GM12878 (cell line): ENCODE measurements at regions of chr21 and their contacts with region 1.

Region 1: GRCh38 chr21:45554477-45555175 is 12.4 kb upstream of the SLC19A1 start:
- DNase-seq: peak; percentile 23
- ATAC-seq: peak; percentile 61
- H3K4me3 ChIP-seq: peak overlapping the region; percentile 78
- H3K27ac ChIP-seq: peak overlapping the region; percentile 67
- H3K4me1 ChIP-seq: peaks cover 30% of the 10 kb centered on the region
- H3K27me3 ChIP-seq: no peaks in the 10 kb centered on the region; a peak in 1 of 4 replicates
- CTCF ChIP-seq: peak; percentile 71 to 86 (median 82)
- EP300 ChIP-seq: no peak
- POLR2A ChIP-seq: peak; percentile 75
- RAD21 ChIP-seq: peak; percentile 72

Region 2: DNA sequence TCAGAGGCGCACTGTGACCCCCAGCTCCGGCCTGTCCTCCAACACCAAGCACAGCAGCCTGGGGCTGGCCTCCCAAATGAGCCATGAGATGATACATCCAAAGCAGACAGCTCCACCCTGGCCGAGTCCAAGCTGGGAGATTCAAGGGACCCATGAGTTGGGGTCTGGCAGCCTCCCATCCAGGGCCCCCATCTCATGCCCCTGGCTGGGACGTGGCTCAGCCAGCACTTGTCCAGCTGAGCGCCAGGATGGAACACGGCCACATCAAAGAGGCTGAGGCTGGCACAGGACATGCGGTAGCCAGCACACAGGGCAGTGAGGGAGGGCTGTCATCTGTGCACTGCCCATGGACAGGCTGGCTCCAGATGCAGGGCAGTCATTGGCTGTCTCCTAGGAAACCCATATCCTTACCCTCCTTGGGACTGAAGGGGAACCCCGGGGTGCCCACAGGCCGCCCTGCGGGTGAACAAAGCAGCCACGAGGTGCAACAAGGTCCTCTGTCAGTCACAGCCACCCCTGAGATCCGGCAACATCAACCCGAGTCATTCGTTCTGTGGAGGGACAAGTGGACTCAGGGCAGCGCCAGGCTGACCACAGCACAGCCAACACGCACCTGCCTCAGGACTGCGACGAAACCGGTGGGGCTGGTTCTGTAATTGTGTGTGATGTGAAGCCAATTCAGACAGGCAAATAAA is 41.5 kb before region 1 on chr21:
- CTCF ChIA-PET with region 1: no interaction called
- POLR2A ChIA-PET with region 1: no interaction called
- RAD21 ChIA-PET with region 1: no interaction called
- SMC1A ChIA-PET with region 1: no interaction called
- in situ Hi-C with region 1: no loop called
- intact Hi-C with region 1: no loop called
- DNase-seq: no peak
- ATAC-seq: no peak
- H3K4me3 ChIP-seq: no peak overlapping the region
- H3K27ac ChIP-seq: no peak overlapping the region
- H3K4me1 ChIP-seq: no peaks in the 10 kb centered on the region
- H3K27me3 ChIP-seq: no peaks in the 10 kb centered on the region
- CTCF ChIP-seq: no peak
- EP300 ChIP-seq: no peak
- POLR2A ChIP-seq: no peak
- RAD21 ChIP-seq: no peak

Region 3: DNA sequence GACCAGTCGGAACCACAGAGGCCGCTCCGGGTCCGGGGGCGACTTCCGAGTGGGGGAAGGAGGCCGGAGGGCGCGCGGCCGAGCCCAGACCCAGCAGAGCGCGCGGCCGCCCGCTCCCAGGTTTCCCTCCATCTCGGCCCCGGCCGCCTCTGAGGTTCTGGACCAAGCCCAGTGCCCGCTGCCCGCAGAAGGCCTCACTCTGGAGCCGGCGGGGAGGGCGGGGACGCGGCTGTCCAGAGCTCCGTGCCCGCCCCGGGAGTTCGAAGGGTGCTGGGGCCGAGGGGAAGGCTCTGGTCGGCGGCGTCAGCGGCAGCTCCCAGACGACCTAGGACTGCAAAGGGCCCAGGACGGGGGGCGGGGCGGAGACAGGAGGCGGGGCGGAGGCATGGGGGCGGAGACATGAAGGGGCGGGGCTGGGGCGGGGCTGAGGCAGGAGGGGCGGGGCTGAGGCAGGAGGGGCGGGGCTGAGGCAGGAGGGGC is 35.7 kb after region 1 on chr21:
- CTCF ChIA-PET with region 1: interaction called, 76 read pairs
- POLR2A ChIA-PET with region 1: interaction called, 3 read pairs
- RAD21 ChIA-PET with region 1: interaction called, 37 read pairs
- SMC1A ChIA-PET with region 1: interaction called, 46 read pairs
- in situ Hi-C with region 1: loop called (anchors 5 kb)
- intact Hi-C with region 1: loop called (anchors 1 kb)
- DNase-seq: no peak
- ATAC-seq: peak; percentile 51
- H3K4me3 ChIP-seq: no peak overlapping the region
- H3K27ac ChIP-seq: no peak overlapping the region
- H3K4me1 ChIP-seq: peaks cover 20% of the 10 kb centered on the region
- H3K27me3 ChIP-seq: no peaks in the 10 kb centered on the region
- CTCF ChIP-seq: no peak
- EP300 ChIP-seq: no peak
- POLR2A ChIP-seq: no peak
- RAD21 ChIP-seq: no peak

Region 4: DNA sequence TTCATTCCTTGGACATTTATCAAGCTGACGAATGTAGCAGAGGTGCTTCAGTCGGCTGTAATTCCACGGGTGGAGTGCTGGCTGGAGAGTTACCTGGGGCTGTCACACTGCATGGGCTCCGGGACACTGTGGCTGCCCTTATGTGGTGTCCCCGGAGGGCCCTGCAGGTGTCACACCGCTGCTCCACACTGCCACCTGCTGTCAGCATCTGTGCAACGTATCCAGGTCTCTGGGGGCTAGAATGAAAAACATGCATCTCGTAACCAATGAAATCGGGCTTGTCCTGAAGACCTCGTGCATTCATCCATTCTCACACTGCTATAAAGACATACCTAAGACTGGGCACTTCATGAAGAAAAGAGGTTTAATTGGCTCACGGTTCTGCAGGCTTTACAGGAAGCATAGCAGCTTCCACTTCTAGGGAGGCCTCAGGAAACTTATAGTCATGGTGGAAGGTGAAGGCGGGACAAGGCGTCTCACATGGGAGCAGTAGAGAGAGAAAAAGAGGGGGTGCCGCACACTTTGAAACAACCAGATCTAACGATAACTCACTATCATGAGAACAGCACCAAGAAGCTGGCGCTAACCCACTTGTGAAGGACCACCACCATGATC is 42.2 kb after region 1 on chr21:
- CTCF ChIA-PET with region 1: interaction called, 76 read pairs
- POLR2A ChIA-PET with region 1: interaction called, 3 read pairs
- RAD21 ChIA-PET with region 1: interaction called, 37 read pairs
- SMC1A ChIA-PET with region 1: interaction called, 46 read pairs
- in situ Hi-C with region 1: loop called (anchors 5 kb)
- intact Hi-C with region 1: loop called (anchors 1 kb)
- DNase-seq: no peak
- ATAC-seq: peak; percentile 70
- H3K4me3 ChIP-seq: no peak overlapping the region
- H3K27ac ChIP-seq: no peak overlapping the region
- H3K4me1 ChIP-seq: peaks cover 12% of the 10 kb centered on the region
- H3K27me3 ChIP-seq: no peaks in the 10 kb centered on the region
- CTCF ChIP-seq: peak; percentile 78 to 85 (median 79)
- EP300 ChIP-seq: no peak
- POLR2A ChIP-seq: no peak
- RAD21 ChIP-seq: peak; percentile 72

Region 5: DNA sequence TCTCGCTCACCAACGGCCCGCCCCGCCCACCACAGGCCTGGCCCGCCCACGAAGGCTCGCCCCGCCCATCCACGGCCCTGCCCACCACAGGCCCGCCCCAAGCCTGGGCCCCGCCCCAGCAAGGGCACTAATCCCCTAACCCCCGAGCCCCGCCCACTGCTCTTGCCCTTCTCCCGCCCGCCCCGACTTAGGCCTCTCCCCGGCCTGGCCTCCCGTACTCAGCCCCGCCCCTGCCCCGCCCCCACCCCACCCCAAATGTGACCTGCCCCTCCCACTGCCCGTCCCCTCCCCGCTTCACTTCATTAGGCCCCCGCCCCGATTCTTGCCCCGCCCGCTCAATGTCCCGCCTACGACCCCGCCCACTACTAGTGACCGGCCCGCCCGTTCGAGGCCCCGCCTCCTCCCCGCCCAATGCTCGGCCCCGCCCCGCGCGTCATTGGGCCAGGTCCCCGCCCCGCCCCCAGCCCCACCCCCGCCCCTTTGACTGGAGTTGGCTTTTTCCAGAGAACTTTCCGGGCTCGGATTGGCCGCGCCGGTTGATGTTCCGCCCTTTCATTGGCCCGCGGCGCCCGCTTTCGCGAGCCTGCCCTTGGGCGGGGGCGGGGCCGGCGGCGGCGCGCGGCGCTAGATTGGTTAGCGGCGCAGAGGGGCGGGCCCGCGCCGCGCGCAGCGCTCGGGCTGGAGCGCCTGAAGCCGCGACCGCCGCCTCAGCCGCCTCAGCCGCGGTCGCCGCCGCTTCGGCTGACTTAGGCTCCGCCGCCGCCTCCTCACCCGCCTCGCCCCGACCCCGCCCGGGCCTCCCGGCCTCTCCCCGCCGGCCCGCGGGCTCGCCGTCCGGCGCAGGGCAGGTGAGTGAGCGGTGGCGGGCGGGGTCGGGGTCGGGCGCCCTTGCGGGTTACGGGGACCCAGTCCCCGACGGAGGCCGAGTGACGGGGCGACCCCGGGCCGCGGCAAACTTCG is 88.7 kb after region 1 on chr21 and contains the start of gene PCBP3:
- CTCF ChIA-PET with region 1: interaction called, 10 read pairs
- POLR2A ChIA-PET with region 1: interaction called, 8 read pairs
- RAD21 ChIA-PET with region 1: interaction called, 13 read pairs
- SMC1A ChIA-PET with region 1: interaction called, 14 read pairs
- in situ Hi-C with region 1: no loop called
- intact Hi-C with region 1: loop called (anchors 2 kb)
- DNase-seq: peak; percentile 66
- ATAC-seq: peak; percentile 86
- H3K4me3 ChIP-seq: peak within 1 kb of the TSS; percentile 60; the same call in 1 of the 2 replicates
- H3K27ac ChIP-seq: no peak within 1 kb of the TSS
- H3K4me1 ChIP-seq: peaks cover 30% of the 10 kb centered on the region
- H3K27me3 ChIP-seq: no peaks in the 10 kb centered on the region
- CTCF ChIP-seq: no peak
- EP300 ChIP-seq: no peak
- POLR2A ChIP-seq: peak; percentile 65
- RAD21 ChIP-seq: no peak
- polyA plus RNA-seq, gene PCBP3: not detected

Region 6: GRCh38 chr21:45820171-45821091 is 265.8 kb after region 1 on chr21:
- CTCF ChIA-PET with region 1: interaction called, 82 read pairs
- POLR2A ChIA-PET with region 1: no interaction called
- RAD21 ChIA-PET with region 1: interaction called, 42 read pairs
- SMC1A ChIA-PET with region 1: interaction called, 38 read pairs
- in situ Hi-C with region 1: loop called (anchors 5 kb)
- intact Hi-C with region 1: loop called (anchors 1 kb)
- DNase-seq: no peak
- ATAC-seq: peak; percentile 88
- H3K4me3 ChIP-seq: no peak overlapping the region
- H3K27ac ChIP-seq: no peak overlapping the region
- H3K4me1 ChIP-seq: peaks cover 4% of the 10 kb centered on the region
- H3K27me3 ChIP-seq: no peaks in the 10 kb centered on the region
- CTCF ChIP-seq: peak; percentile 83 to 94 (median 90); a peak in 5 of 6 replicates
- EP300 ChIP-seq: no peak
- POLR2A ChIP-seq: no peak
- RAD21 ChIP-seq: peak; percentile 94

Region 7: GRCh38 chr21:45880097-45881068 is 325.8 kb after region 1 on chr21:
- CTCF ChIA-PET with region 1: interaction called, 21 read pairs
- POLR2A ChIA-PET with region 1: no interaction called
- RAD21 ChIA-PET with region 1: interaction called, 11 read pairs
- SMC1A ChIA-PET with region 1: interaction called, 3 read pairs
- in situ Hi-C with region 1: no loop called
- intact Hi-C with region 1: no loop called
- DNase-seq: no peak
- ATAC-seq: peak; percentile 98
- H3K4me3 ChIP-seq: no peak overlapping the region
- H3K27ac ChIP-seq: no peak overlapping the region
- H3K4me1 ChIP-seq: no peaks in the 10 kb centered on the region
- H3K27me3 ChIP-seq: no peaks in the 10 kb centered on the region; a peak in 1 of 4 replicates
- CTCF ChIP-seq: peak; percentile 65 to 70 (median 65)
- EP300 ChIP-seq: no peak
- POLR2A ChIP-seq: no peak
- RAD21 ChIP-seq: no peak